Astrocyte of the cerebellum (primary cell): ENCODE measurements at regions of chr2 and their contacts with region 1.

Region 1: GRCh38 chr2:71536226-71536671 is 82.9 kb downstream of the DYSF start:
- DNase-seq: no peak
- H3K4me3 ChIP-seq: no peak overlapping the region
- CTCF ChIP-seq: no peak

Region 2: DNA sequence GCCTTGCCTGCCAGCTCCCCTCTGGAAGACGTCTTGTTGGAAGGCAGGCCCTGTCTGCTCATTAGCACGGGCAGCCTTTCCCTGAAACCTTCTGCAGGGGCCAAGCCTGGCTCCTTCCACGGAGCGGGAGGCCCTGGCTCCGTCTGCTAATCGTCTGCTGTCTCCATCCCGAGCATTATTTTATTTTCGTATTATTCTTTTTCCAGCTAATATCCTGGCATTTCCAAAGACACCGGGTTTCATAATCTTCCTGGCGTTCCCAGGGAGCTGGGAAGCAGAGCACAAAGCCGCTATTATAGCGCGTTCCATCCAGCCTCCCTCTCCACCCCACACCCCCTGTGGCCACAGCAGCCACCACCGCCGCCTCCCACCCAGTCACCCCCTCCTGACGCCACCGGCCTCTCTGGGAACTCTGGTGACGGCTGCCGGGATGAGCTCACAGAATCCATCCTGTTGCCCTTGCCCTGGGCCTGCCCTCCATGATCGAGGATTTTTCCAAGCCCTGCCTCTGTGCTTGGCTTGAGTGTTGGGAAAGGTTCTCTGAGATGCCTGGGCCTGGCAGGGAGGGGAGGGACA is 42.6 kb after region 1 on chr2:
- in situ Hi-C with region 1: no loop called
- DNase-seq: no peak
- H3K4me3 ChIP-seq: no peak overlapping the region
- CTCF ChIP-seq: no peak

Region 3: DNA sequence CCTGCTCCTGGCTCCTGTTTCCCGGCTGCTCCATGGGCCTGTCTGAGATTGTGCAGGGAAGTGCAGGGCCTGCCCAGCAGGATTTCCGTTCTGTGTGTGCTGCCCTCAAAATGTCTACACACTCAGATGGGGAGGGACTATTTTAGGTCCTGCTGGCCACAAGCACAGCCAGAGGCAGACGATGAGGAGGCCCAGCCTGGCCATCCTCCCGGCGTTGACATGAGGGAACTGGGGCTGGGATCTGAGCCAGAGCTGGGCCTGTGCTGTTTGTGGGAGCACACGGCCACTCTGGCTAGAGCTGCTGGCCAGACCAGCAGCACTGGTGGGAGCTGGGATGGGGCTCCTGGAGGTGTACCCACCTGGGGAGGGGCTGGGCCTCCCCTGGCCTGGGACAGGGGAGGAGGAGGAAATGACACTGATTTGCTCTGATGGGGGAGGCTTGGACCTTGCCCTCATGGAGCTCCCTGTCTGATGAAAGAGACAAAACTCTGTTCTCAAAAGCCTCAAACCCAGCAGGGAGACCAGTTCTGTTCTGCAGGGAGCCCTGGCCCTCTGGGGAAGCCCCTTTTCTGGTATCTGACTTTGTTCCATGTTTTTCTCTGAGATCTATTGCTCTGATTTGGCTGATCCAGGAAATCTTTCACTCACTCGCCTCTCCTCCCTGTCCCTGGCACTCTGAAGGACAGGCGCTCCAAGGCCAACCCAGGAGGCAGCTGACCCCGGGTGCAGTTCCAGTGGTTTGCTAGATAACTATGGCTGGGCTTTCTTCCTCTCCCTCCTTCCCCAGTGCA is 78.9 kb after region 1 on chr2:
- in situ Hi-C with region 1: loop called (anchors 5 kb)
- DNase-seq: peak; percentile 73
- H3K4me3 ChIP-seq: no peak overlapping the region
- CTCF ChIP-seq: no peak

Region 4: DNA sequence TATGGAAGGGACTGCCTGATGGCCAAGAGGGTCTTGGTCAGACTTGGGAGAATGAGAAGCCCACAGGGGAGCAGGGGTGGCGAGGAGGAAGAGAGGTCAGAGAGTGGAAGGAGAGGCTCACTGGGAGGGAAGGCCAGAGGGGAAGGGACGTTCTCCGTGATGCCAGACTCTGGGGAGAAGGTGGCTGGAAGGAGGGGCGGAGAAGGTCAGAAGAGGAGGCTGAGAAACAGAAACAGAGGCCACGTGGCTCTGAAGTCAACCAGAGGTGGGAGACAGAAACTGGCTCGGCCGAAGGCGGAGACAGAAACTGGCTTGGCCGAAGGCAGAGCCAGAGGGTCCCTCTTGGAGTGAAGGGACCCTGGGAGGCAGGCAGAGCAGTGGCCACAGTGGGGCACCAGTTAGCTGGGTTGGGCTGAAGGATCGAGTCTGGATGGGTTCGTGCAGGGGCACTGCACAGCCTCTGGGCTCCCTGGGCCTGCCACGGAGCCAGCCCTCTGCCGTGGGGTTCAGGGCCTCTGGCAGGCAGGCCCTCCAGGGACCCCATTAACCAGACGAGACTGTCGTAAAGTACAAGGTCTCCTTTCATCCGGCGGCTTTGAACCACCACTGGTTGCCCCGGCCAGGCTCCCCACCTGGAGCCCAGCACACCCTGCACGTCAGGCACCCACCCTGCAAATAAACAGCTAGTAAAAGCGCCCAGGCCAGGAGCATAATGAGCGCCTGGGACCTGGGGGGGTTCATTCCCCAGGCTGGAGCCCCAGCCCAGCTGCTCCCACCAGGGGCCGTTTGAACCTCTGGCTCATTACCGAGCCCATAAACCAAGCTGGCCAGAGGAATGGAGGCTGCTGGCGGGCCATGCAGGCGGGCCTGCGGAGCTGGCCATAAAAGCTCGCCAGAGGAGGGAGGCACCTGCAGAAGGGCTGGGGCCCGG is 135.9 kb after region 1 on chr2:
- in situ Hi-C with region 1: no loop called
- DNase-seq: no peak
- H3K4me3 ChIP-seq: no peak overlapping the region
- CTCF ChIP-seq: no peak

Region 5: DNA sequence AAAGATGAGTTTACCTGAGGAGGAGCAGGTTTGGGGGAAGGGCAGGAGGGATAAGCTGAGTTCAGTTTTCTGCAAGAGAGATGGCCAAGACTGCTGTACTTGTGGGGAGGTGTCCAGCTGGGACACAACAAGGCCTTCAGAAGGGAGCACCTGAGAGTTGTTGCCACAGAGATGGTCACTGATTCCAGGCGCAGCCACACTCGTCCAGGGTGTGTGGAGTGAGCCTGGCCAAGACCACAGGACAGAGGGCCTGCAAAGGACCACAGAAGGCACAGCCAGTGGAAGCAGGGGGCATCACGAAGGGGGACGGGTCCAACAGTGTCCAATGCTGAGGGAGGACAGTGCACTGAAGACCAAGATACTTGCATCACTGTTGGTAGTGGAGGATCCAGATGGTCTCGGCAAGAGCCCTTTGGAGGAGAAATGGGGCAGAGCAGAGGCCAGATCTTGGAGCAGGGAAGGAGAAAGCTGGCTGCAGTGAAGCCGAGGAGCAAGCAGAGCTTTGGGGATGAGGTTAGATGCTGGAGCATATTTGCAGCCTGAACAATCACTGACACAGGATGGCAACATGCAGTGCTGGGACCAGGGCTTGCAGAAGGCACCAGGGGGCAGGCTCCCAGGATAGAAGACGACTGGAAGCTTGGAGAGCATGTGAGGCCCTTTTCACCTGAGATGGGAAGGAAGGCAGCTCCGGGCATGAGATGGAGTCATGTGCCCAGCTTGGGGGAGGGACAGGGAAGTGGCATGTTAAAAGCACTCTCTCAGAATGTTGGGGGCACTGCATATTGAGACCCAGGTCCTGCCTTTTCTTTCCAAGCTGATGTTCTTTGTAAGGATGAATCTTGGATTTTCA is 397.4 kb after region 1 on chr2:
- in situ Hi-C with region 1: loop called (anchors 5 kb)
- DNase-seq: no peak
- H3K4me3 ChIP-seq: no peak overlapping the region
- CTCF ChIP-seq: peak; percentile 27

Region 6: DNA sequence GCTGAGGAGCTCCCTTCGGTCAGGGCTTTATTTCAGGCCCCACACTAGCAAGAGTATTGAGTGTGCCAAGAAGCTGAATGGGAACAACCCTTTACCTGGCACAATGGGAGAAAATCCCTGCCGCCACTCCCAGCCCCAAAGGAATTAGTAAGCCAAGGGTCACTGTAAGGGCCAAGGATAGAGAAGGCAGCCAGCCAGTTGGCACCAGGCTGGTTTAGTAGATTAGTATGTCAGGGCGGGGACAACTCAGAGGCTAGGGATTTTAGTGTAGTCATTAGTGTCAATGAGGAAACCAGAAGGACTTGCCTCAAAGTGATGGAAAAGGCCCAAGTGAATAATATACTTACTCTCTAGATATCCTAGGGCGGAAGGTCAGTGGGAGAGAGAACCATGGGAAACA is 646.3 kb after region 1 on chr2:
- in situ Hi-C with region 1: no loop called
- DNase-seq: no peak
- H3K4me3 ChIP-seq: no peak overlapping the region
- CTCF ChIP-seq: no peak